ENCODE measurements at regions of chr15 and their contacts with region 1.

Region 1: DNA sequence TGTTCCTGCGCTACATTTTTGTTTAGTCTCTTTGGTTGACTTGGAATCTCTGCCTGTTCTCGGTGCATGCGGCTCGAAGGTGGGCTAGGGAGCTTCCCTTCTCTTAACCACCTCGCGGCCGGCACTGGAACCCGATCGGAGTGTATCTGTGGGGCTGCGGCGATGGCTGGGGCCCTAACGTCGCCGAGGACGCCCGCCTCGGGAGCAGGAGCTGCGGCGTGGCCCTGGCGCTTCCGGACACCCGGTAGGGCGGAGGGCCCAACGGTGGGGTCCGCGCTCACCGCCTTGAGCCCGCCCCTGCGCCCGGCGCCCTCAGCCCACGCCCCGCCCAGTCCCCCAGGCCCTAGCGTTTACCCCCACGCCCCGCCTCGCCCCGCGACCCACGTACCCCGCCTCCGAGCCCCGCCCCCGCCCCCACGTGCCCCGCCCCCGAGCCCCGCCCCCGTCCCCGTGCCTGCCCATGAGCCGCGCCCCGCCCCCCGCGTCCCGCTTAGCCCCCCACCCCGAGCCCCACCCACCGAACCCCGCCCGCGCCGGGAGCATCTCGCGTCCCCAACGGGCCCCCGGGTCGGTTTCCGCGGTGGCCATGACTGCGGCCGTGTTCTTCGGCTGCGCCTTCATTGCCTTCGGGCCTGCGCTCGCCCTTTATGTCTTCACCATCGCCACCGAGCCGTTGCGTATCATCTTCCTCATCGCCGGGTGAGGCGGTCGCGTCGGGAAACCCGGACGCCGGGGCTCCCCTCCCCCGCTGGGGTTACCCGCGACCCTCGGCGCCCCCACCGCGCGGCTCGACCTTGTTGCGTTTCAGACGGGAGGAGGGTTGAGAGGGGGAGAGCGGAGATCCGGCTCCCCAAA is at the start of gene APH1B:
- DNase-seq: peak; percentile 79 to 91
- H3K4me3 ChIP-seq: peak within 1 kb of the TSS; percentile 74 to 99
- H3K27ac ChIP-seq: peak within 1 kb of the TSS; percentile 91 to 99
- H3K4me1 ChIP-seq: peaks cover 0 to 9% (median 4%) of the 10 kb centered on the region in 4 donors
- H3K27me3 ChIP-seq: no peaks in the 10 kb centered on the region
- CTCF ChIP-seq: no peak

Region 2: GRCh38 chr15:63122002-63122893 is 155.0 kb before region 1 on chr15:
- intact Hi-C with region 1: loop called (anchors 5 kb)
- DNase-seq: peak; percentile 86 to 95
- H3K4me3 ChIP-seq: peak overlapping the region; percentile 85 to 98
- H3K27ac ChIP-seq: peak overlapping the region; percentile 84 to 98
- H3K4me1 ChIP-seq: peaks cover 0 to 8% (median 1%) of the 10 kb centered on the region in 4 donors
- H3K27me3 ChIP-seq: no peaks in the 10 kb centered on the region
- CTCF ChIP-seq: peak in 1 of 2 experiments; percentile 28

Measured in tibial artery (tissue), 4 donors.